HepG2 (cell line): ENCODE measurements at regions of chr1 and their contacts with region 1.

Region 1: DNA sequence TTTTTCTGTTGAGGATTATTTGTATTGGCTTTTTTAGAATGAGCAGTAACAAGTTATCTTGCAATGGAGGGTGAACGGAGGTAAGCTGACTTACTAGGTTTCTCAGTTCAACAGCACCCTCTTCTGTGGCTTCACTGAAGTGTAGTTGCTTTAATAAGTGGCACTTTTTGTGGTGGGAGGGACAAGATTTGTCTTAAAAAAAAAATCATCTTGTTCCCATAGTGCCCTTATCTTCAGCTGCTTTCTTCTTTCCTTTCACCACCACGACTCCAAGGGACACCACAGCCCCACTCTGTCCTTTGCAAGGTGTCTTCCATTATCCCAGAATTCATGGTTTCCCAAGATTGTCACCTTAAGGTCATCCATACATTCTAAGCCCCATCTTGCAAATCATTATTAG is 92.9 kb downstream of the PIGK start:
- DNase-seq: peak; percentile 39
- ATAC-seq: peak; percentile 68
- H3K4me3 ChIP-seq: no peak overlapping the region
- H3K27ac ChIP-seq: no peak overlapping the region
- H3K4me1 ChIP-seq: no peaks in the 10 kb centered on the region
- H3K27me3 ChIP-seq: no peaks in the 10 kb centered on the region
- CTCF ChIP-seq: peak; percentile 68
- EP300 ChIP-seq: no peak
- POLR2A ChIP-seq: no peak
- RAD21 ChIP-seq: peak; percentile 34; the same call in 1 of the 2 replicates

Region 2: DNA sequence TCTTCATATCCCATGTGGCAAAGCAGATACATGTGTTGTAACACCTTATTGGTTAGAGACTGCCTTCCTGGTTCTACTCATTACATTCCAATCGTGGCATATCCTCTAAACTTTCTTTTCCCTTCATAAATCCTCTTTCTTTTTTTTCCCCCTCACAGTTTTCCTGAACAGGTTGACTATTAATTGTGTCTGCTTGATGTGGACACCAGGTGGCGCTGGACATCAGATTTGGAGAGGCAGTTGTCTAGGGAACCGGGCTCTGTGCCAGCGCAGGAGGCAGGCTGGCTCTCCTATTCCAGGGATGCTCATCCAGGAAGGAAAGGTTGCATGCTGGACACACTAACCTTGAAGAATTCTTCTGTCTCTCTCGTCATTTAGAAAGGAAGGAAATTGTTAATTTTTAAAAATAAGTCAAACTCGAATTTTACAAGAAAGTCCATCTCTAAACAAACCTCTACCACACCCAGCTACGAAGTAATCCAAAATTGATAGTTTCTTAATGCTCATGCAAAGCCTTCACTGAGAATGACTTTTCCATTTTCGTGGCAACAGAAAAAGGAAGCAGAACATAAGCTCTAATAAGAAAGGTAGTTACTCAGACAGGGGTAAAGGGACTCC is 1134.7 kb before region 1 on chr1:
- CTCF ChIA-PET with region 1: no interaction called
- POLR2A ChIA-PET with region 1: no interaction called
- in situ Hi-C with region 1: no loop called
- intact Hi-C with region 1: loop called (anchors 5 kb)
- DNase-seq: peak; percentile 81
- ATAC-seq: peak; percentile 88
- H3K4me3 ChIP-seq: no peak overlapping the region
- H3K27ac ChIP-seq: no peak overlapping the region
- H3K4me1 ChIP-seq: no peaks in the 10 kb centered on the region
- H3K27me3 ChIP-seq: no peaks in the 10 kb centered on the region
- CTCF ChIP-seq: peak; percentile 81
- EP300 ChIP-seq: no peak
- POLR2A ChIP-seq: no peak
- RAD21 ChIP-seq: peak; percentile 21; the same call in 1 of the 2 replicates

Region 3: DNA sequence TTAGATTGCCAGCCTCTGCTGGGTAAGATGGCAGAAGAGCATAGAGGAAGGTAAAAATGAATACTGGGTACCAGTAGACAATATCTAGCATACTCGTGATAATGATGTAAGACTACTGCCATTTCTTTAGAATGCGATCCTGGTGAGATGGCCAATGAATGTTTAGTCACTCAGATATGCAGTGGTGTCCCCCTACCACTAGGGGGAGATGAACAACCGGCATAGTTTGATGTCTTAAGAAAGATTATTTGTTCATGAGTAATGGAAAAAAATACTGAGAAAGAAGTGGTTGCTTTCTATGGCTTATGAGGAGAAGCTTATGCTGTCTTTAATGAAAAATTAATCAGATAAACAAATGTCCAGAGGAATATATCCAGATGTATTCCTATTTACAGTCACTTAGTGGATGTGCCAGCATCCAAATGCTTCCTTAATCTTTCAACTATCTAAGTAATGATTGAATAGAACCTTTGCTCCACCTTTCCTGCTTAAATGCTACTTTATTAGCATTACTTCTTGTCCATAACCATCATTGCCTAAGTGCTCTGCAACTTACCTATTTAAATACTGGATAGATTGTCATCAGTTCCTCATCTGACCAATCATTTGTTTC is 795.2 kb before region 1 on chr1:
- CTCF ChIA-PET with region 1: interaction called, 4 read pairs
- POLR2A ChIA-PET with region 1: no interaction called
- in situ Hi-C with region 1: loop called (anchors 25 kb)
- intact Hi-C with region 1: loop called (anchors 5 kb)
- DNase-seq: peak; percentile 18
- ATAC-seq: peak; percentile 82
- H3K4me3 ChIP-seq: no peak overlapping the region
- H3K27ac ChIP-seq: no peak overlapping the region
- H3K4me1 ChIP-seq: no peaks in the 10 kb centered on the region
- H3K27me3 ChIP-seq: no peaks in the 10 kb centered on the region; a peak in 1 of 5 replicates
- CTCF ChIP-seq: peak; percentile 73
- EP300 ChIP-seq: no peak
- POLR2A ChIP-seq: no peak
- RAD21 ChIP-seq: no peak

Region 4: GRCh38 chr1:76901158-76901767 is 225.0 kb before region 1 on chr1:
- CTCF ChIA-PET with region 1: interaction called, 3 read pairs
- POLR2A ChIA-PET with region 1: no interaction called
- in situ Hi-C with region 1: loop called (anchors 10 kb)
- intact Hi-C with region 1: loop called (anchors 1 kb)
- DNase-seq: peak; percentile 46
- ATAC-seq: peak; percentile 93
- H3K4me3 ChIP-seq: no peak overlapping the region
- H3K27ac ChIP-seq: no peak overlapping the region
- H3K4me1 ChIP-seq: no peaks in the 10 kb centered on the region
- H3K27me3 ChIP-seq: no peaks in the 10 kb centered on the region; a peak in 1 of 5 replicates
- CTCF ChIP-seq: peak; percentile 76
- EP300 ChIP-seq: no peak
- POLR2A ChIP-seq: no peak
- RAD21 ChIP-seq: 0 out of 2 replicates have a peak, but pooled peaks have one; percentile 18

Region 5: DNA sequence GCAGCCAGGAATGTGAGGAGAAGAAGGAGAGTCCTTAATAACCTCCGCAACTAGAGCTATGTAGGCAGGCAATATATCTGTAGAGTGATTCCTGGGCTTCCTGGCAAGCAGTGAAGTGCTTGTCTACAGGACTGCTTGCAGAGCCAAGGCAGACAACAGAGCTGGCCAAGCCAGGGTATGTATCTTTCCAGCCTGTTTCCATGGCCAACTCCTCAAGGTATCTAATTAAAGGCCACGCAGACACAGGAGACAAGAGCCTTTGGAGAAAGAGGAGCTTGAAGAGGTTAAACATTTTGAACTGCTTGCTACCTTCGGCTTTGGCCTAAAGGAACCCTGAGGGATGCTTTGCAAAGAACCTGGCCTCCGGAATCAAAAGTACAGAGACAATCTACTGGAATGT is 44.5 kb before region 1 on chr1:
- CTCF ChIA-PET with region 1: no interaction called
- POLR2A ChIA-PET with region 1: no interaction called
- in situ Hi-C with region 1: no loop called
- intact Hi-C with region 1: no loop called
- DNase-seq: no peak
- ATAC-seq: no peak
- H3K4me3 ChIP-seq: no peak overlapping the region
- H3K27ac ChIP-seq: no peak overlapping the region
- H3K4me1 ChIP-seq: no peaks in the 10 kb centered on the region
- H3K27me3 ChIP-seq: no peaks in the 10 kb centered on the region
- CTCF ChIP-seq: no peak
- EP300 ChIP-seq: no peak
- POLR2A ChIP-seq: no peak
- RAD21 ChIP-seq: no peak

Region 6: DNA sequence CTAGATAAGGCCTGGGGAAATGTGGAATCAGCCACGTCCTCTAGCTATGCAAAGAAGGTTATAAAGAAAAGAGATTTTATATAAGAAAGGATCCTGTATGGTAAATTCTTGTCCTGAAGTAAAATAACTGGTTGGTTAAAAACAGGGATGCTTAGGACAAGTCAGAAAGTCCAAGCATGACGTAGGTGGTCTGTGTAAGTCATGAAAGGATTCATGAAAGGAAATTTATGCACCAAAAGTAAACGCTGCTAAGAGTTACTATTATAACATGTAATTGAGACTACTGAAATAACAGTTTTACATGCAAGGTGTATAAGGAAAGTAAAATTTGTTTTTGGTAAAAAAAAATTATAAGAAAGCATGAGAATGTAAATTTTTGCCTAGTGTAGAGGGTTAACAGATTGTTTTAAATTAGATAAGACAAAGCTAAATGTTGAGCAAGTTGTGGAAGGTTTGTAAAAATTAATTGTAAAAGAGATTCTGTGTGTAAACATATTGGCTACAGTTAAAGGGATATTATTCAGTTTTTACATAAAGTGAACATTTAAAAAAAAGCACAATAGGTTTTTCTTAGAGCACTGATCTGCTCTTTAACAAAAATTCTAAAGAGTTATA is 49.0 kb after region 1 on chr1:
- CTCF ChIA-PET with region 1: no interaction called
- POLR2A ChIA-PET with region 1: no interaction called
- in situ Hi-C with region 1: no loop called
- intact Hi-C with region 1: no loop called
- DNase-seq: no peak
- ATAC-seq: no peak
- H3K4me3 ChIP-seq: no peak overlapping the region
- H3K27ac ChIP-seq: no peak overlapping the region
- H3K4me1 ChIP-seq: no peaks in the 10 kb centered on the region
- H3K27me3 ChIP-seq: no peaks in the 10 kb centered on the region
- CTCF ChIP-seq: no peak
- EP300 ChIP-seq: no peak
- POLR2A ChIP-seq: no peak
- RAD21 ChIP-seq: no peak